ENCODE measurements at regions of chr2 and their contacts with region 1.

Region 1: DNA sequence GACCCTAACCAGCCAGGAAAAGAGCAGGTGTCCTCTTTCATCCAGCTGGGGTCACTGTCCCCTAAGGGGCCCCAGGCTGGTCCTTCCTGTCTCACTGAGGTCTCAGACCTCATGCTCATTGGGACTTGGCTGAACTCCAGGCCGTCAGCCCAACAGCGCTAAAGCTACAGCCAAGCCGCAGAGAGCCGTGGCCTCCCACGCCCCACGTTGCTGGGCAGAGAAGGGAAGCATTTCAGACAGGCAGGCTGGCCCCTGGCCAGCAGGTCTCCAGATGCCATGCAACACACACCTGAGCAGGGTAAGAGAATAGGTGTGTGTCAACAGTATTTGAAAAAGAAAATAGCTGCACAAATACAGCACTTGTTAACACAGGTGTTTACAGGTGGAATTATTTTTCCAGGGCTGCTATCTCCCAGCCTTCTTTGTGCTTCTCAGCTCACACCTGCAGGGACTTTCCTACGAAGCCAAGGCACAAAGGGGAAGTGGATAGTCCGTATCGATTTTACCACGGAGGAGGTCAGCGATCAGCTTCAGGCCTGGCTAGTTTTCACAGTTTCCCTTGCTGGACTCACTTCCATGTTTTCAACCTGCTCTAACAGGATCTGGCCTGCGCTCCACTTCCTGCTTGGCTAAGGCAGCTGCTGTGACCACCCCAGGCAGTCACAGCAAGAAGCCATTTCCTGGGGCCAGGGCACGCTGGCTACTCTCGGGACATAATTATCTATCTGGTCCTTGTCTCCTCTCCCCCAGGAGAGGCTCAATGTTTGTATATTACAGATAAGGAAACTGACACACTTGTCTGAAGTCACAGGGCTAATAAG is 156.1 kb upstream of the ID2 start:
- DNase-seq: peak; percentile 82
- H3K4me3 ChIP-seq: peak overlapping the region; percentile 37
- H3K27ac ChIP-seq: peak overlapping the region; percentile 95
- H3K4me1 ChIP-seq: peaks cover 100% of the 10 kb centered on the region
- CTCF ChIP-seq: peak; percentile 60

Region 2: GRCh38 chr2:8234757-8235374 is 290.9 kb before region 1 on chr2:
- CTCF ChIA-PET with region 1: interaction called, 3 read pairs
- POLR2A ChIA-PET with region 1: interaction called, 6 read pairs
- intact Hi-C with region 1: loop called (anchors 2 kb)
- DNase-seq: peak; percentile 97
- H3K4me3 ChIP-seq: peak overlapping the region; percentile 41
- H3K27ac ChIP-seq: peak overlapping the region; percentile 97
- H3K4me1 ChIP-seq: peaks cover 99% of the 10 kb centered on the region
- CTCF ChIP-seq: no peak

Region 3: GRCh38 chr2:8432706-8433336 is 93.0 kb before region 1 on chr2:
- CTCF ChIA-PET with region 1: no interaction called
- POLR2A ChIA-PET with region 1: no interaction called
- intact Hi-C with region 1: loop called (anchors 5 kb)
- DNase-seq: peak; percentile 38
- H3K4me3 ChIP-seq: peak overlapping the region; percentile 36
- H3K27ac ChIP-seq: peak overlapping the region; percentile 28
- H3K4me1 ChIP-seq: peaks cover 55% of the 10 kb centered on the region
- CTCF ChIP-seq: no peak

Region 4: GRCh38 chr2:8462899-8463648 is 62.7 kb before region 1 on chr2:
- CTCF ChIA-PET with region 1: no interaction called
- POLR2A ChIA-PET with region 1: no interaction called
- intact Hi-C with region 1: no loop called
- DNase-seq: no peak
- H3K4me3 ChIP-seq: no peak overlapping the region
- H3K27ac ChIP-seq: no peak overlapping the region
- H3K4me1 ChIP-seq: peaks cover 13% of the 10 kb centered on the region
- CTCF ChIP-seq: no peak

Region 5: GRCh38 chr2:8544786-8545694 is 19.2 kb after region 1 on chr2:
- CTCF ChIA-PET with region 1: interaction called, 10 read pairs
- POLR2A ChIA-PET with region 1: interaction called, 21 read pairs
- intact Hi-C with region 1: loop called (anchors 1 kb)
- DNase-seq: peak; percentile 95
- H3K4me3 ChIP-seq: peak overlapping the region; percentile 40
- H3K27ac ChIP-seq: peak overlapping the region; percentile 98
- H3K4me1 ChIP-seq: peaks cover 100% of the 10 kb centered on the region
- CTCF ChIP-seq: peak; percentile 81

Region 6: GRCh38 chr2:8628230-8629209 is 102.7 kb after region 1 on chr2:
- CTCF ChIA-PET with region 1: no interaction called
- POLR2A ChIA-PET with region 1: interaction called, 5 read pairs
- intact Hi-C with region 1: loop called (anchors 1 kb)
- DNase-seq: peak; percentile 78
- H3K4me3 ChIP-seq: peak overlapping the region; percentile 70
- H3K27ac ChIP-seq: peak overlapping the region; percentile 82
- H3K4me1 ChIP-seq: peaks cover 69% of the 10 kb centered on the region
- CTCF ChIP-seq: peak; percentile 81